Activated T-helper 1 cell treated with anti-CD3 and anti-CD28 coated beads, Interleukin-12 subunit alpha, Interleukin-12 subunit beta, Interleukin-2, Interleukin-4 antibody, amounts not matched to agents 30 ng/mL and 10 ng/mL and 1 ng/mL, durations not matched to agents 14 hours and 24 hours and 36 hours (primary cell): ENCODE measurements at regions of chr11 and their contacts with region 1.

Region 1: DNA sequence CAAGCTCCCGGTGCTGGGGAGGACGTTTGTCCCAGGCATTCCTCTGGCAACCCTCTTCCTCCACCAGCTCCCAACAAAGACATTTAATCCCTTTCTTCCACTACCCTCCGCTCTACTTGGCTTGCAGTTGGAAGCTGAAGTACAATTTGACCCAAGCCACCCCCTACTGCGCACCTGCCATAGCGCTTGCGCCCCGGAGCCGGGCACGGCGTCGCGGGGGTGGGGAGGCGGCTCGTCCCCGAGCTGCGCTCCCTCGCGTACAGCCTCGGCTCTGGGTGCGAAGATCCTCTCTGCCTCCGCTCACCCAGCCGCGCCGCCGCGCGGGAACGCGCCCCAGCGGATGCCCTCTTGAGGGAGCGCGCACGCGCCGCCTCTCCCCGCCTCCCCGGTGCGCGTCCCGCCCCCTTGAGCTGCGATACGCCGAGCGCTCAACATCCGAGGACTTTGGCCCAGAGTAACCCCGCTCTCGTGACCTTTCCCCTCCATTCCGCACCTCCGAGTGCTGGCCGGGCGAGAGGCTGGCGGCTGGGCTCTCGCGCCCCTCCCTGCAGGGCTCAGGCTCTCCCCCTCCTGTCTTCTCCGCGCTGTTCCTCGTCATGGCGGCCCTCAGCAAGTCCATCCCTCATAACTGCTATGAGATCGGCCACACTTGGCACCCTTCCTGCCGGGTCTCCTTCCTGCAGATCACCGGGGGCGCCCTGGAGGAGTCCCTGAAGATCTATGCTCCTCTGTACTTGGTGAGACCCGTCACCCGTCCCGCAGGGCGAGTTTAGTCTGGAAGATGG is at the start of gene TMEM135:
- DNase-seq: peak; percentile 93
- H3K4me3 Mint-ChIP-seq: peak within 1 kb of the TSS; percentile 98
- H3K27ac Mint-ChIP-seq: peak within 1 kb of the TSS; percentile 89
- H3K4me1 Mint-ChIP-seq: peaks cover 49% of the 10 kb centered on the region
- H3K27me3 Mint-ChIP-seq: peaks cover 17% of the 10 kb centered on the region
- total RNA-seq, gene TMEM135: 27.9 and 28.8 TPM in 2 replicates

Region 2: DNA sequence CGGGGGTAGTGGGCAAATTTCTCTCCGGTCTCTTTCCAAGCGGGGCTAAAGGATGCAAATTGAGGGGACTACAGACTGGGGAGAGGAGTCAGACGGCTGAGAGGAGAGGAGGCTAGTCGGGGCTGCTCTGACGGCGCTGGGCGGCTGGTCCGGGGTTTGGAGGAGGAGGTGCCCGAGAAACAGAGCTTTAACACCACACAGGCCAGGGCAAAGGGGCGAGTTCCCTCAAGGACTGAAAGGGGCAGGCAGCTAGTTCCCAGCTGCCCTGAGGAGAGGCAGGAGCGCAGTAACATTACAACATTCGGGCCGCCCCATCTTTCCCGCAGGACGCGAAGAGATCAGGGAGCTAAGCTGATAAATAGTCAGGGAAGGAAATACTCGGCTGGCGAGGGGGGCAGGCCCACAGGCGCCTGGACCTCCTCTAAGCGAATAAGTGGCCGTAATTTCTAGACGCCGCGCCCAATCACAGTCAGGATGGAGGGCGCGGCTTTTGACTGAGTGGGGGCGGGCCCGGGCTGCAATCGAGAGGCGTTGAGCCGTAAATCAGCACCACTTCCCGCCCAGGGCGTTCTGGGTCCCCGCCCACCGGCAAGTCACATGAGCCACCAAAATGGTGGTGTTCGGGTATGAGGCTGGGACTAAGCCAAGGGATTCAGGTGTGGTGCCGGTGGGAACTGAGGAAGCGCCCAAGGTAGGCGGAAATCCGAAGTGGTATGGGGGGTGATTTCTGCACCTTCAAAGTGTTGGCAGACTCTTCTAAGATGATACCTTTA is 1409.5 kb before region 1 on chr11 and contains the start of gene TMEM126B:
- intact Hi-C with region 1: loop called (anchors 10 kb)
- DNase-seq: peak; percentile 96
- H3K4me3 Mint-ChIP-seq: peak within 1 kb of the TSS; percentile 97
- H3K27ac Mint-ChIP-seq: peak within 1 kb of the TSS; percentile 94
- H3K4me1 Mint-ChIP-seq: peaks cover 52% of the 10 kb centered on the region
- H3K27me3 Mint-ChIP-seq: peaks cover 6% of the 10 kb centered on the region
- total RNA-seq, gene TMEM126B: 52.5 and 57.2 TPM in 2 replicates

Region 3: DNA sequence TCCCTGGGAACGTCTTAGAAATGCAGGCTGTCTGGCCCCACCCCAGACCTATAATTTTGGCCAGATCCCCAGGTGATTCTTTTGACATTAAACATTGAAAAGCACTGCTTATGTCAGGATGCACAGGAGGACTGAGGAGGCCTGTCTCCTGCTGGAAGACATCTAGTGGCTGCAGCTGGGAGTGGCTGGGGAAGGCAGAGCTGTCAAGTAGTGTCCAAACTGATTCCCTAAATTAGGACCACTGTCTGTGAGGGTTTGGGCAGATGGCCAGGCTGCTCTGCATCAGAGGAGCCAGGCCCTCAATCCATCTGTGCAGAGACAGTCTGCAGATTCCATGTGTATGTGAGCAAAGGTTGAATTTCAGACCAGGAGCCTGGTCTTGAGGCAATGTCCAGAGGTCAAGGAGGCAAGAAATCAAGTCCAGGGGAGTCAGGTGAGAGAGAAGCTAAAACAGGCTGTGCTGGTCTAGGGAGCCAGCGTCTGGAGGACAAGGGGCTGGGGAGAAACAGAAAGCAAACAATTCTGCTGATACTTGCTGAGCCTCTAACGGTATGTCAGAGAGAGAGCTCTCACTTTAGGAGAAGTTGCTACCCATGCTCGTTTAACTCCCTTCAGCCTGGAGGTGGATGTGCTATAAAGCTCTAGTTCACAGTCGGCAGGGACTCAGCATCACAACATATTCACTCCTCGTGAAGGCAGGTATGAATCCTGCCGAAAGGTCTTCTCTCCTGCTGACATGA is 1211.4 kb before region 1 on chr11:
- intact Hi-C with region 1: loop called (anchors 5 kb)
- DNase-seq: no peak
- H3K4me3 Mint-ChIP-seq: peak overlapping the region; percentile 1
- H3K27ac Mint-ChIP-seq: peak overlapping the region; percentile 87
- H3K4me1 Mint-ChIP-seq: peaks cover 74% of the 10 kb centered on the region
- H3K27me3 Mint-ChIP-seq: no peaks in the 10 kb centered on the region

Region 4: GRCh38 chr11:86955361-86956120 is 82.1 kb before region 1 on chr11 and contains the start of gene FZD4:
- intact Hi-C with region 1: loop called (anchors 1 kb)
- DNase-seq: peak; percentile 51
- H3K4me3 Mint-ChIP-seq: peak within 1 kb of the TSS; percentile 95
- H3K27ac Mint-ChIP-seq: no peak within 1 kb of the TSS
- H3K4me1 Mint-ChIP-seq: peaks cover 8% of the 10 kb centered on the region
- H3K27me3 Mint-ChIP-seq: peaks cover 59% of the 10 kb centered on the region
- total RNA-seq, gene FZD4: 0.05 TPM in 1 of 2 replicates, not detected in the other

Region 5: DNA sequence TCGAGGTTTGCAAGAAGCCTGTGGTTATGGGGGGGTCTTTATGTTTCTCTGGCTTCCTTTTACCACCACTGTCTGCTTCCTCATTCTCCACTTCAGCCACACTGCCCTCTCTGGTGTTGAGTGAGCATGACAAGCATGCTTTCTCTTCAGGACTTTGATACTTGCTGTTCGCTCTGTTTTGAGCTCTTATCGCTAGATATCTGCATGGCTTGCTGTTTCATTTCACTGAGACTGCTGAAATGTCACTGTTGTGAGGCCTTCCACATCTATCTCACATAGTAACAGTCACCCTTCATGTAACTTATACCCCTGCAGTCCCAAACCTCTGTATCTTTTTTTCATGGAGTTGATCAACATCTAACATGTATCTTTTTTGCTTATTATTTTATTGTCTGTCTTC is 59.9 kb after region 1 on chr11:
- intact Hi-C with region 1: loop called (anchors 5 kb)
- DNase-seq: peak; percentile 19
- H3K4me3 Mint-ChIP-seq: no peak overlapping the region
- H3K27ac Mint-ChIP-seq: no peak overlapping the region
- H3K4me1 Mint-ChIP-seq: peaks cover 10% of the 10 kb centered on the region
- H3K27me3 Mint-ChIP-seq: no peaks in the 10 kb centered on the region

Region 6: GRCh38 chr11:87252869-87253268 is 215.2 kb after region 1 on chr11:
- intact Hi-C with region 1: loop called (anchors 2 kb)
- DNase-seq: no peak
- H3K4me3 Mint-ChIP-seq: no peak overlapping the region
- H3K27ac Mint-ChIP-seq: peak overlapping the region; percentile 72
- H3K4me1 Mint-ChIP-seq: peaks cover 15% of the 10 kb centered on the region
- H3K27me3 Mint-ChIP-seq: no peaks in the 10 kb centered on the region